Ovary (tissue), 10 donors: ENCODE measurements at regions of chr12 and their contacts with region 1.

Region 1: GRCh38 chr12:102769319-102769916 is 147.6 kb downstream of the PAH start:
- DNase-seq: peak; percentile 61 to 81 (median 79)
- H3K4me3 ChIP-seq: no peak overlapping the region
- H3K27ac ChIP-seq: no peak overlapping the region
- H3K4me1 ChIP-seq: no peaks in the 10 kb centered on the region
- H3K27me3 ChIP-seq: no peaks in the 10 kb centered on the region
- CTCF ChIP-seq: peak; percentile 56 to 74 (median 62)
- EP300 ChIP-seq: no peak
- POLR2A ChIP-seq: no peak

Region 2: DNA sequence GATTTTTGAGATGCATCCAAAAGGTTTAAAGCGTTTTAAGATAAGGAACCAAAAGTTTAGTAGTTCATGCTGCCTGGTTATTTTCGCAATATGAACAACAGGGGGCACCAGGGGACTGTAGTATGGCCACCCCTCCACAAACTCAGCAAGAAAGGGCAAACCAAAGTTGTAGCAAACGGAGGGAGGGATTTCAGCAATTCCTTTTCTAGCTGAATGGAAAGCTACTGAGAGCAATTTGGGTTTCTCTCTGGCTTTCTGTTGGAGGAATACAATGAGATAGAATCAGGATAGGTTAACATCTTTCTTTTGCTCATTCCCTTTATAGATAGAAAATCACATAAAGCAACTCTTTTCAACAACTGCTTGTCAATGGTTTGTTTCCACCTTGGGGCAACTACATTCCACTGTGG is 829.6 kb before region 1 on chr12:
- intact Hi-C with region 1: loop called in 2 of 4 experiments (anchors 10 kb)
- DNase-seq: peak; percentile 36 to 72 (median 46)
- H3K4me3 ChIP-seq: no peak overlapping the region
- H3K27ac ChIP-seq: no peak overlapping the region
- H3K4me1 ChIP-seq: peaks cover 6% of the 10 kb centered on the region
- H3K27me3 ChIP-seq: no peaks in the 10 kb centered on the region
- CTCF ChIP-seq: peak; percentile 26 to 67 (median 64)
- EP300 ChIP-seq: no peak
- POLR2A ChIP-seq: no peak

Region 3: GRCh38 chr12:102484428-102484958 is 284.9 kb before region 1 on chr12:
- intact Hi-C with region 1: loop called in 2 of 4 experiments (anchors 5 to 10 kb)
- DNase-seq: peak; percentile 21 to 68 (median 48)
- H3K4me3 ChIP-seq: no peak overlapping the region
- H3K27ac ChIP-seq: no peak overlapping the region
- H3K4me1 ChIP-seq: no peaks in the 10 kb centered on the region
- H3K27me3 ChIP-seq: no peaks in the 10 kb centered on the region
- CTCF ChIP-seq: peak; percentile 37 to 58 (median 43)
- EP300 ChIP-seq: no peak
- POLR2A ChIP-seq: no peak

Region 4: GRCh38 chr12:102702447-102703114 is 66.8 kb before region 1 on chr12:
- intact Hi-C with region 1: loop called in 1 of 4 experiments (anchors 10 kb)
- DNase-seq: peak; percentile 17 to 63 (median 46)
- H3K4me3 ChIP-seq: no peak overlapping the region
- H3K27ac ChIP-seq: no peak overlapping the region
- H3K4me1 ChIP-seq: no peaks in the 10 kb centered on the region
- H3K27me3 ChIP-seq: no peaks in the 10 kb centered on the region
- CTCF ChIP-seq: peak in 2 of 3 donors; percentile 23 to 37
- EP300 ChIP-seq: no peak
- POLR2A ChIP-seq: no peak

Region 5: GRCh38 chr12:103705927-103706326 is 936.5 kb after region 1 on chr12:
- intact Hi-C with region 1: no loop called
- DNase-seq: no peak
- H3K4me3 ChIP-seq: no peak overlapping the region
- H3K27ac ChIP-seq: no peak overlapping the region
- H3K4me1 ChIP-seq: no peaks in the 10 kb centered on the region
- H3K27me3 ChIP-seq: no peaks in the 10 kb centered on the region
- CTCF ChIP-seq: no peak
- EP300 ChIP-seq: no peak
- POLR2A ChIP-seq: no peak